Sciatic nerve (tissue), 2 donors: ENCODE measurements at regions of chr15 and their contacts with region 1.

Region 1: GRCh38 chr15:83571820-83572707 is 81.9 kb upstream of the ADAMTSL3 start:
- DNase-seq: no peak
- ATAC-seq: peak; percentile 67

Region 2: DNA sequence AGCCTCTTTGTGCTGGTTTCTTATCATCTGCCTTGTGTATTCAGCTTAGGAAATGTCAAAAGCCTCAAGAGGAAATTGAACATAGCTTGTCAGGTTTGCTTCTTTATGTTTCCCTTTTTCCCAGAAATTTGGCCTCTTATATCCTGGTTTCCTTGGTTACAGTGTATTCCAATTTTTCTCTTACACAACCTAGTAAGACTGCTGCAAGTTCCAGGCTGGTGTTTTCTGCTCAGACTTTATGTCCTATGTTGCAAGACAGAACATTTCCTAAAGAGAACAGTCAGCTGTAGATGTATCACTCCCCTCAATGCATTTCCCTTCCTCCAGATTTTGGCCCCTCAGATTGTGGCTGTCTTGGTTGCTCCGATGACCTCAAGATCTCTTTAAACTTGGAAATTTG is 22.4 kb before region 1 on chr15:
- intact Hi-C with region 1: no loop called
- DNase-seq: no peak
- ATAC-seq: no peak

Region 3: DNA sequence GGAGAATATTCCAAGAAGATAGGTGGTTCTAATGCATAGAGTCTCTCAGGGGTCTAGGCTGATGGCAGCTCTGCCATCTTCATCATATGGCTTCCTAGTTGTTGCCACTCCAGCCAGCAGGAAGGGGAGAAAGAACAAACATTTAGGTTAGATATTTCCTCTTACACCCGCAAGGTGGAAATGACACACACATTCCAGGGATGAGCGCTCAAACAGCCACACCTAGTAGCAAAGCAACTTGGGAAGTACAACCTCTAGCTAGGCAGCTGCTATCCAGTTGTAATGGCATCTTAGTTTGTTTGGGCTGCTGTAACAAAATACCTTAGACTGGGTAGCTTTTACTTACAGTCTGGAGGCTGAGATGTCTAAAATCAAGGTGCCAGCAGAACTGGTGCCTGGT is 30.0 kb after region 1 on chr15:
- intact Hi-C with region 1: no loop called
- DNase-seq: no peak
- ATAC-seq: no peak

Region 4: DNA sequence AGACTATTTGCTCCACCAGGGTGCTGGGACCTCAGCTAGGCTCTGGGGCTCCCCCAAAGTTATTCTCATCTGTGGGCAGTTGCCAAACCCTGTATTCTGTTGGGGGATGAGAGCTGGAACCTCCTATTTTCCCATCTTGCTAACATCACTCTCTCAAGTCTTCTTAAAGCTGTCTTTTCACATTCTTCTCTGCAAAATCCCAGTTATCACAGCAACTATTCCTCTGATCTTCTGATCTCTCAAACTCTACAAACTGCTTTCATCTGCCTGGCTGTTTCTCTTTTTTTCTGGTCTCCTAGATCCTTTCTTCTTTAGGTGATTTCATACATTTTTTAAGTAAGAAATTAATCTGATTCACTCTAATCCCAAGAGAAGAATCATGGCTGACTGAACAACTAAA is 71.1 kb after region 1 on chr15:
- intact Hi-C with region 1: no loop called
- DNase-seq: no peak
- ATAC-seq: no peak

Region 5: DNA sequence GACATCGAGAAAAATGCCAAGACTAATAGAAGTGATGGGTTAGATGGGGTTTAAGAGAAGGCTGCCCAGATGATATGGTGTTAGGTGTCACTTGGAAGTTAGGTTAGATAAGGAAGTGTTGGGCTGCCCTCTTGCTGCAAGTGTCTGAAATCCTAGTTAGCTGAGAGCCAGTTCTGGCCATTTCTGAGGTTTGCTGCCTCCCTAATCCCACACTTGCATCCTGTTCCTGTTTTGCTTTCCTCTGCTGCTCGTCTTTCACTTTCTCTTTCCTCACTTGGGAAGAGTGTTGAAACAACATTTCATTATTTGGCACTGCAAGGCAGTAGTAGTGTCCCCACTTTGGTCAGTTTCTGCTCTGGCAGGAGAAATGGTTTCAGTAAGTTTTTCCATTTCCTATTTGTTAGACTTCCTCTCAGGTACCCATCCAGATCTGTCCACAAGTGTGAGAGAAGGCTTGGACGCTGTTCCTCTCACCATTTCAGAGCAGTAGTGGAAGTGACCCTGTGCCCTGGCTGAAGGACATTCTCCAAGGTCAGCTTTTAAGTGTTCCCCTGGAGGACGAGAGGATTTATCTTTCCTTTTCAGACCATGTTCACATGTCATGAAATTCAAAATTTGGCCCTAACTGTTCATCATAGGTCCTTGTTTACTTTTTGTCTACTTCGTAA is 175.1 kb after region 1 on chr15:
- intact Hi-C with region 1: loop called (anchors 10 kb)
- DNase-seq: no peak
- ATAC-seq: peak; percentile 96